A673 (cell line): ENCODE measurements at regions of chr9 and their contacts with region 1.

Region 1: DNA sequence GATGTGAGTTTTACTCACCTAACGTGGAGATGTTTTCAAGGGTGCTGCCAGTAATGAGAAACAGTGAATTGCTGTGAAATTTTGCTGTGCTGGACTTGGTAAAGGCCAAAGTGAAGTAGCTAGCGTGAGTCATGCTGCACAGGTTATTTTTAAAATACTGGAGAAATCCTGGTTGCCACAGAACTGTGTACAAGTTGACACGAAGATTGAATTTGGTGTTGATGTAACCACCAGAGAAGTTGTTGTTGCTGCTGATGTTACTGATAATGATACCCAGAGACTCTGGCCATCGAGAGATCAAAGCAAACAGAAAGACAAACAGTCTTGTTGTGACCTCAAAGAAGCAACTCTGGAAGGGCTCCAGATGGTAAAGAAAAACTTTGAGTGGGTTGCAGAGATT is 188.0 kb upstream of the NFIL3 start:
- DNase-seq: no peak
- H3K4me3 ChIP-seq: no peak overlapping the region
- H3K27ac ChIP-seq: no peak overlapping the region
- H3K4me1 ChIP-seq: no peaks in the 10 kb centered on the region
- H3K27me3 ChIP-seq: no peaks in the 10 kb centered on the region
- CTCF ChIP-seq: no peak

Region 2: GRCh38 chr9:92547356-92547755 is 935.7 kb after region 1 on chr9:
- CTCF ChIA-PET with region 1: no interaction called
- POLR2A ChIA-PET with region 1: interaction called, 14 read pairs
- intact Hi-C with region 1: no loop called
- DNase-seq: no peak
- H3K4me3 ChIP-seq: no peak overlapping the region
- H3K27ac ChIP-seq: no peak overlapping the region
- H3K4me1 ChIP-seq: no peaks in the 10 kb centered on the region
- H3K27me3 ChIP-seq: no peaks in the 10 kb centered on the region
- CTCF ChIP-seq: no peak